AG04450 (cell line): ENCODE measurements at regions of chr21 and their contacts with region 1.

Region 1: GRCh38 chr21:25607151-25608043 is at the start of gene MRPL39:
- DNase-seq: peak; percentile 77
- H3K4me3 ChIP-seq: peak within 1 kb of the TSS; percentile 83
- H3K27ac ChIP-seq: peak within 1 kb of the TSS; percentile 75
- H3K27me3 ChIP-seq: no peaks in the 10 kb centered on the region
- CTCF ChIP-seq: peak; percentile 77
- polyA plus RNA-seq, gene MRPL39: 22.8 and 37.0 TPM in 2 replicates

Region 2: DNA sequence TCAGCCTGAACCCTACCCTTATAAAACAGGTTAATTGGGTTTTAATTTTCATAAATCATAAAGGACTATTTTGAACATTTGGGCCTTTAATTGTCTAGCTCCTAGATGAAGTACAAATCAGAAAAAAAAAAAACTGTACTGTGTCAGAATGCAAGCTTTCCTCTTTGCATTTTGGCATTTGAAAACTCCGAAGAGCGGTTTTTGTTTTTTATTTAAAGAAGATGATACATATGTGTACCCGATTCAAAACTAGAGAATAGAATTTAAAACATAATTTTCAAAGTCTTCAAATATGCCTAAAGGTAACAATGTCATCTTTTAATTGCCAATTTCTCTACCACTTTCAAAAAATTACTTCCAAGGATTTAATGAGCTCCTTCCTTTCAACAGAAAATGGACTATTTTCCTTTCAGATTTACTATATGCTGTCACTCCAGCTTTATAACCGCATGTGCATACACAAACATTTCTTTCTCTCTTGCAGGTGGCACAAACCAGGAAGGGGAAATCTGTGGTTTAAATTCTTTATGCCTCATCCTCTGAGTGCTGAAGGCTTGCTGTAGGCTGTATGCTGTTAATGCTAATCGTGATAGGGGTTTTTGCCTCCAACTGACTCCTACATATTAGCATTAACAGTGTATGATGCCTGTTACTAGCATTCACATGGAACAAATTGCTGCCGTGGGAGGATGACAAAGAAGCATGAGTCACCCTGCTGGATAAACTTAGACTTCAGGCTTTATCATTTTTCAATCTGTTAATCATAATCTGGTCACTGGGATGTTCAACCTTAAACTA is 33.8 kb before region 1 on chr21:
- CTCF ChIA-PET with region 1: interaction called, 24 read pairs
- POLR2A ChIA-PET with region 1: no interaction called
- DNase-seq: peak; percentile 83
- H3K4me3 ChIP-seq: no peak overlapping the region
- H3K27ac ChIP-seq: no peak overlapping the region
- H3K27me3 ChIP-seq: no peaks in the 10 kb centered on the region
- CTCF ChIP-seq: no peak

Region 3: GRCh38 chr21:25700741-25701140 is 93.3 kb after region 1 on chr21:
- CTCF ChIA-PET with region 1: interaction called, 97 read pairs
- POLR2A ChIA-PET with region 1: no interaction called
- DNase-seq: no peak
- H3K4me3 ChIP-seq: no peak overlapping the region
- H3K27ac ChIP-seq: no peak overlapping the region
- H3K27me3 ChIP-seq: no peaks in the 10 kb centered on the region
- CTCF ChIP-seq: no peak

Region 4: GRCh38 chr21:25722631-25723030 is 115.2 kb after region 1 on chr21:
- CTCF ChIA-PET with region 1: interaction called, 19 read pairs
- POLR2A ChIA-PET with region 1: no interaction called
- DNase-seq: no peak
- H3K4me3 ChIP-seq: no peak overlapping the region
- H3K27ac ChIP-seq: no peak overlapping the region
- H3K27me3 ChIP-seq: no peaks in the 10 kb centered on the region
- CTCF ChIP-seq: no peak

Region 5: GRCh38 chr21:25757531-25757930 is 150.1 kb after region 1 on chr21:
- CTCF ChIA-PET with region 1: interaction called, 13 read pairs
- POLR2A ChIA-PET with region 1: no interaction called
- DNase-seq: no peak
- H3K4me3 ChIP-seq: no peak overlapping the region
- H3K27ac ChIP-seq: no peak overlapping the region
- H3K27me3 ChIP-seq: no peaks in the 10 kb centered on the region
- CTCF ChIP-seq: no peak

Region 6: GRCh38 chr21:25813917-25814316 is 206.5 kb after region 1 on chr21:
- CTCF ChIA-PET with region 1: no interaction called
- POLR2A ChIA-PET with region 1: no interaction called
- DNase-seq: no peak
- H3K4me3 ChIP-seq: no peak overlapping the region
- H3K27ac ChIP-seq: no peak overlapping the region
- H3K27me3 ChIP-seq: peaks cover 7% of the 10 kb centered on the region
- CTCF ChIP-seq: no peak

Region 7: GRCh38 chr21:26715878-26716506 is 1108.6 kb after region 1 on chr21:
- CTCF ChIA-PET with region 1: interaction called, 19 read pairs
- POLR2A ChIA-PET with region 1: no interaction called
- DNase-seq: peak; percentile 16
- H3K4me3 ChIP-seq: no peak overlapping the region
- H3K27ac ChIP-seq: no peak overlapping the region
- H3K27me3 ChIP-seq: no peaks in the 10 kb centered on the region
- CTCF ChIP-seq: peak; percentile 85